Activated T-helper 2 cell treated with anti-CD3 and anti-CD28 coated beads, Interferon-gamma antibody, Interleukin-2, Interleukin-4, amounts not matched to agents 10 μg/mL and 5 μg/mL and 100 μg/mL, durations not matched to agents 14 hours and 24 hours and 36 hours (primary cell): ENCODE measurements at regions of chr15 and their contacts with region 1.

Region 1: DNA sequence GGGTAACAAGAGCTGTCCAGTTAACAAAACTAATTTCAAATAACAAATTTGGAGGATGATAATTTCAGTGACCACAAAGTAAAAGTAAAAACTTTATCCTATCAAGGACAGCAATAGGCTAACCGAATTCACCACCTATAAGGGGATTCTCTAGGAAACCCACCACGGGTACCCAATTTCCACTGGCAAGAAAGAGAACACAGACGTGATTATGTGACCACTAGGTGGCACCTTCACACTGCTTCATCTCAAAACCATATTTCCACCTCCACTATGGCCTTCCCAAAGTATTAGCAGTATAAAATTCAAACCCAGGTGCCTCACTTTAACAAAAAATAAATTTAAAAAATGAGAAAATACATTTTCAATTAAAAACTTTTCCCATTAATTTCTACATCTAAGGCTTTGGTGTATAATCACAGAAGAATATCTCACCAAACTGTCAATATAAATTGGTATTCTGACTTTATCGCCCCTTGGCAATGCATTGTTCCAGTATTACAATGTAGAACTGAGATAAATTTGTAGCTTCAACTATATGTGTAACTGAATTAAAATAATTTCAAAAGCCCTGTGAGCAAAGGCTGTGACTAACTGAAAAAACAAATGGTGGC is 96.5 kb downstream of the FSIP1 start:
- DNase-seq: no peak
- H3K4me3 Mint-ChIP-seq: no peak overlapping the region
- H3K27ac Mint-ChIP-seq: no peak overlapping the region
- H3K4me1 Mint-ChIP-seq: peaks cover 7% of the 10 kb centered on the region
- H3K27me3 Mint-ChIP-seq: peaks cover 12% of the 10 kb centered on the region

Region 2: DNA sequence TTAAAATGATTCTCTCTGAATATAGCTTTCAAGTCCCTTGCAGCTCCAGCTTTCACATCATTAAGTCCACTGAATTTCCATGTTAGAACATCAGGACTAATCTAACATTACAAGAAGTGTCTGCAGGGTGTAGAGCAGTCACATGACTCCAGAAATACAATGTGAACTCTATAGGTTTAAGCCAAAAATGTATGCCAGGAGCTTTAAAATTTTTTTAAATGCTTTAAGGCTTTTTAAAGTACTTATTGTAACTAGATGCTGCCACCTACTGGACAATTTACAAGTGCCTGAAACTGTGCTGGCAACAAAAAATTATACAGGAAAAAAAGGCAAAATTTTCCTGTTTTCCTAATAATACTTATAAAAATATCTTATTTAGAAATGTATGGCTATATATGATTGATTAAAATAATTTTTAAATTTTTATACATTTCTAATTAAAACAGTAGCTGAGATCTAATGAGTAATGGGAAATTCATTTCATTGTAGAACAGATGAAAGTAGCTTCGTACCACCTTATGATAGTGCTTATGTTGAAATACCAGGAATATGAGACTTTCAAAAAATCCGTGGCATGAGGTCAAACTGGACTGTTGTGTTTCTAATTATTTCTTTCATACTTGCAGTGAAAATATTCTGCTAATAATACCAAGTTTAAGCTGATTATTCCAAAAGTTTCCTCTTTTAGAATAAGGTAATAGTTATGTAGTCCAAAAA is 70.9 kb after region 1 on chr15:
- intact Hi-C with region 1: loop called (anchors 1 kb)
- DNase-seq: no peak
- H3K4me3 Mint-ChIP-seq: no peak overlapping the region
- H3K27ac Mint-ChIP-seq: no peak overlapping the region
- H3K4me1 Mint-ChIP-seq: no peaks in the 10 kb centered on the region
- H3K27me3 Mint-ChIP-seq: peaks cover 59% of the 10 kb centered on the region

Region 3: GRCh38 chr15:39874890-39875549 is 188.9 kb after region 1 on chr15:
- intact Hi-C with region 1: loop called (anchors 5 kb)
- DNase-seq: no peak
- H3K4me3 Mint-ChIP-seq: no peak overlapping the region
- H3K27ac Mint-ChIP-seq: no peak overlapping the region
- H3K4me1 Mint-ChIP-seq: peaks cover 12% of the 10 kb centered on the region
- H3K27me3 Mint-ChIP-seq: peaks cover 6% of the 10 kb centered on the region